Activated CD4-positive, alpha-beta T cell treated with anti-CD3 and anti-CD28 coated beads for 36 hours (primary cell): ENCODE measurements at regions of chr10 and their contacts with region 1.

Region 1: GRCh38 chr10:80260295-80261243 is 28.9 kb downstream of the MAT1A start:
- DNase-seq: peak; percentile 52
- ATAC-seq: peak; percentile 60
- H3K4me3 Mint-ChIP-seq: no peak overlapping the region
- H3K27ac Mint-ChIP-seq: no peak overlapping the region
- H3K4me1 Mint-ChIP-seq: no peaks in the 10 kb centered on the region
- H3K27me3 Mint-ChIP-seq: no peaks in the 10 kb centered on the region

Region 2: GRCh38 chr10:80144067-80144695 is 116.4 kb before region 1 on chr10:
- CTCF ChIA-PET with region 1: interaction called, 6 read pairs
- POLR2A ChIA-PET with region 1: no interaction called
- intact Hi-C with region 1: loop called in 1 of 2 experiments (anchors 1 kb)
- DNase-seq: peak; percentile 65
- ATAC-seq: peak; percentile 73
- H3K4me3 Mint-ChIP-seq: peak overlapping the region; percentile 61
- H3K27ac Mint-ChIP-seq: peak overlapping the region; percentile 52
- H3K4me1 Mint-ChIP-seq: peaks cover 13% of the 10 kb centered on the region
- H3K27me3 Mint-ChIP-seq: peaks cover 2% of the 10 kb centered on the region

Region 3: GRCh38 chr10:80272793-80273517 is 12.4 kb after region 1 on chr10:
- CTCF ChIA-PET with region 1: interaction called, 11 read pairs
- POLR2A ChIA-PET with region 1: no interaction called
- intact Hi-C with region 1: no loop called
- DNase-seq: no peak
- ATAC-seq: no peak
- H3K4me3 Mint-ChIP-seq: no peak overlapping the region
- H3K27ac Mint-ChIP-seq: no peak overlapping the region
- H3K4me1 Mint-ChIP-seq: no peaks in the 10 kb centered on the region
- H3K27me3 Mint-ChIP-seq: peaks cover 2% of the 10 kb centered on the region